CD4-positive, alpha-beta memory T cell (primary cell): ENCODE measurements at regions of chr2 and their contacts with region 1.

Region 1: GRCh38 chr2:178450774-178451525 is at the starts of genes PJVK and PRKRA:
- DNase-seq: peak; percentile 93 to 95 (median 94)
- H3K4me3 ChIP-seq: peak within 1 kb of the TSS; percentile 40 to 76
- H3K4me3 Mint-ChIP-seq: peak within 1 kb of the TSS; percentile 87 to 93 (median 90)
- H3K27ac ChIP-seq: peak within 1 kb of the TSS; percentile 97
- H3K27ac Mint-ChIP-seq: peak within 1 kb of the TSS; percentile 94 to 97 (median 97)
- H3K4me1 ChIP-seq: peaks cover 32% of the 10 kb centered on the region
- H3K4me1 Mint-ChIP-seq: peaks cover 21 to 34% (median 27%) of the 10 kb centered on the region in 4 donors
- H3K27me3 ChIP-seq: no peaks in the 10 kb centered on the region
- H3K27me3 Mint-ChIP-seq: peaks cover 2 to 3% of the 10 kb centered on the region in 2 donors
- total RNA-seq, gene PJVK: 3.6 to 4.1 TPM
- total RNA-seq, gene PRKRA: 51.0 to 52.4 TPM

Region 2: DNA sequence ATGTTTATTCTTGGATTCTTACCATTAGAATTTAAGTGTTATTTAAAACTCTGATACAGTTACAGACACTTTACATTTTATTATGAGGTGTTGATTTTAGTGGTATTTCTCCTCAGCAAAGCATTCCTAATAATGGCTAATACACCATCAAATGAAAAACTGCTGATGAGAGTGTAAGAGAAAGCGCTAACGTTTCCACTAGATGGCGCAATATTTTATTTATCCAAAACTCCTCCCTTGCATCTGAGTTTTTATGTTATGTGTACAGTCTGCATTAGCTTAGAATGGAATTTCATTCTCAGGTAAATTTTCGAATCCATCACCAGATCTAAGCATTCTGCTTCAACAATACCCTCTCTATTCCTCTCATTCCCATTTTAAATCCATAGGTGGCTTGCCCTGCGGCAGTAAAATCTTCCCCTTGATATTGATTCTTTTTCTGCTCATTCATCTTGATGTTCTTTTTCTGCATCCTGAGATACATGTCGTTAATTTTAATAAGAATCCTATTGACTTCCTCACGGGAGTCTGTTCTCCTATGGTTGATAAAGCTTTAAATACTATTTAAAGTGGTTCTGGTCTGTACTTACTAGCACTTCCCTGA is 53.8 kb before region 1 on chr2:
- CTCF ChIA-PET with region 1: interaction called, 6 read pairs
- POLR2A ChIA-PET with region 1: interaction called, 6 read pairs
- intact Hi-C with region 1: loop called (anchors 1 kb)
- DNase-seq: peak in 4 of 5 donors; percentile 32 to 47 (median 37)
- H3K4me3 ChIP-seq: no peak overlapping the region
- H3K4me3 Mint-ChIP-seq: no peak overlapping the region
- H3K27ac ChIP-seq: no peak overlapping the region
- H3K27ac Mint-ChIP-seq: no peak overlapping the region
- H3K4me1 ChIP-seq: no peaks in the 10 kb centered on the region
- H3K4me1 Mint-ChIP-seq: no peaks in the 10 kb centered on the region
- H3K27me3 ChIP-seq: no peaks in the 10 kb centered on the region
- H3K27me3 Mint-ChIP-seq: peaks cover 0 to 3% of the 10 kb centered on the region in 2 donors

Region 3: DNA sequence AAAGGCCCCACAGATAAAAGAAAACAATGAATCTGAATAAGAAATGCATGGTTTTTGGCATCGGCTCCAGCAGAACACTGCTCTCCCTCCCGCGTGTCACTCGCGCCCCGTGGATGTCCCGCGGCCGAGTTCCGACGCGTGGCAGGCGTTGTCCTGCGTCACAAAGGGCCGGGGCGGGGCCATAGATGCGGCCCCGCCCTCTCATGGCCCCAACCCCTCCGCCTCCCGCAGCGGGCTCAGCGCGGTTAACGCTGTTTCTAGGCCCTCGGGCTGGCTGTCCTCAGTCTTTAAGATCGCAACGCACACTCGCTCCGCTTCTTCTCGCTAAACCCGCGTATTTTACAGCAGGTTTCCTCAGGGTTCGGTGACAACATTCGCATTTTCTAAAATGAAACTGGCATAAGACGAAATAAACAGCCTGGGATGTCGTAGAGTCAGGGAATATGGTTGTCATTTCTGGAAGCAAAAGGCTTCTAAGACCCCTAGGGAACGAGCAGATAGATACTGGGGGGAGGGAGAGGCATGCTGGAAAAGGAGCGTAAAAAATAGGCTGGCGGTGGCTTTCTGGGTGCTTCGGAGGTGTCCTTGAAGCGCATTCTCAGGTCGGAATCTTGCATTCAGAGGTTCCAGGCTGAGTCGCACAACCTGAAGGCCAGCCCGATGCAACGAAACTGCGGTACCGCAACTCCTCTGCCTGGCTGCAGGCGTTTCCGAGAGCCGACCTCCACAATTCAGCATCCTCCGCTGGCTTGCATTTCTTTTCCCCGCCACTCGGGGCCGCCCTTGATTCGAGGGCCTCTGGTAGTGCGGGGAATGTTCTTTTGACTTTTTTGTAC is 27.7 kb after region 1 on chr2 and contains the start of gene FKBP7:
- CTCF ChIA-PET with region 1: interaction called, 5 read pairs
- POLR2A ChIA-PET with region 1: interaction called, 49 read pairs
- intact Hi-C with region 1: loop called (anchors 1 kb)
- DNase-seq: peak; percentile 80 to 88 (median 83)
- H3K4me3 ChIP-seq: peak within 1 kb of the TSS; percentile 96 to 100
- H3K4me3 Mint-ChIP-seq: peak within 1 kb of the TSS; percentile 96 to 100 (median 99)
- H3K27ac ChIP-seq: peak within 1 kb of the TSS; percentile 81
- H3K27ac Mint-ChIP-seq: peak within 1 kb of the TSS; percentile 96 to 100 (median 99)
- H3K4me1 ChIP-seq: peaks cover 41% of the 10 kb centered on the region
- H3K4me1 Mint-ChIP-seq: peaks cover 33 to 50% (median 39%) of the 10 kb centered on the region in 4 donors
- H3K27me3 ChIP-seq: no peaks in the 10 kb centered on the region
- H3K27me3 Mint-ChIP-seq: no peaks in the 10 kb centered on the region
- total RNA-seq, gene FKBP7: 0.79 to 0.80 TPM